RWPE1 (cell line): ENCODE measurements at regions of chr2 and their contacts with region 1.

Region 1: GRCh38 chr2:191501561-191502168 is 176.3 kb upstream of the NABP1 start:
- DNase-seq: peak; percentile 50
- H3K27ac ChIP-seq: no peak overlapping the region
- CTCF ChIP-seq: peak; percentile 66

Region 2: DNA sequence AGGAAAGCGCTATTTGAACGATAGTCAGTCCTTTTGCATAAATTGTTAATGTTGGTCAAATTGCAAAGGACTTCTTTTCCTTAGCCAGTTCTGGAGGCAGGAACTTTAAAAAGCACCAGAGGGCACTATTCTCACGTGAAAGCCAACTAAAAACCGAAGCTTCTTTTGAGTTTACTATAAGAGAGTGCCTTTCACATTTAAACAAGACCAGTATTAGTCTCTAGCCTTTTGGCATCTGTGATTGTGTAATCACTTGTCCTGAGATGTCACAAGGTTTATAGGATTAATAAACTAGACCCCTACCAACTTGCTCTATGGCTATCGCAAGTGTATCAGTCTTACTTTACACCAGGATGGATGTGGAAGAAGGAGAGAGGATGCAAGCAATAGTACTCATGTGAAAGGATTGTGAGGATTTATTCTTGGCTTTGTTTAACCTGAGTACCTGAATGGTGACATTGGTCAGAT is 336.5 kb before region 1 on chr2:
- CTCF ChIA-PET with region 1: interaction called, 18 read pairs
- POLR2A ChIA-PET with region 1: no interaction called
- DNase-seq: peak; percentile 52
- H3K27ac ChIP-seq: no peak overlapping the region
- CTCF ChIP-seq: peak; percentile 61

Region 3: DNA sequence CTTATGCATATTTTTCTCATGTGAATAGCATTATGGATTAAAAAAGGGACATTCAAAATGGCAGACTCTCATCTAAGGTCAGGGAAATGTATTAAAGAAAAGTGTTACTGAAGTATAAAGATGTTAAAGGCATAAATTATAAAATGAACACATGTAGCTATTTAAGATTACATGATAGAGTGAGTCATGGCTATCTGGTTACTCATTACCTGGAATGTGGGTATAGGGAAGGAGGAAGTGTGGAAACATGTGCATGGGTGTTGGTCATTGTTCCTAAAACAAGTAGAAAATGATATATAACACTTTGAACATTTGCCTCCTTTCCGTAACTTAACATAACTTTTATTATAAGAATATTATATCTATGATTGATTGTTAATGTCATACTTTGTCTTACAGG is 190.0 kb before region 1 on chr2:
- CTCF ChIA-PET with region 1: no interaction called
- POLR2A ChIA-PET with region 1: no interaction called
- DNase-seq: peak; percentile 83
- H3K27ac ChIP-seq: no peak overlapping the region
- CTCF ChIP-seq: no peak

Region 4: DNA sequence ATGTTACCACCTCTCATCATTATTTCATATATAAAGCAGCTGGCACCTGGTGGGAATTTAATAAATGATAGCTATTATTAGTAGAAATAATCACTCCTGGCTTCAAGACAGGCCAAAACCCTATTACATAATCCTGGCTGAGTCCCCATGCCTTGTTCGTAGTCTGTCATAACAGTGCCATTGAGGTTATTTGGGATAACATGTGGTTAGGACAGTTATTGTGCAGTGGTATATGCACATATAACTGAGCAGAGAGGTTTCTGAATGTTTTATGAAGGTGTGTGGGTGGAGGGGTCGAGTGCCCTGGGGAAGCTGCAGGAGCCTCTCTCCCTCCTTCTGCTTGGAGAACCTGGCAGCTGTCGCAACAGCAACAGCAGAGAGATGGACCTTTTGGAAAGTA is 13.9 kb after region 1 on chr2:
- CTCF ChIA-PET with region 1: interaction called, 17 read pairs
- POLR2A ChIA-PET with region 1: no interaction called
- DNase-seq: no peak
- H3K27ac ChIP-seq: no peak overlapping the region
- CTCF ChIP-seq: no peak

Region 5: GRCh38 chr2:191617575-191617974 is 115.9 kb after region 1 on chr2:
- CTCF ChIA-PET with region 1: interaction called, 10 read pairs
- POLR2A ChIA-PET with region 1: no interaction called
- DNase-seq: no peak
- H3K27ac ChIP-seq: no peak overlapping the region
- CTCF ChIP-seq: no peak